ENCODE measurements at regions of chr10 and their contacts with region 1.

Region 1: GRCh38 chr10:70296406-70296899 is 12.6 kb upstream of the NPFFR1 start:
- DNase-seq: peak; percentile 69 to 83 (median 83)
- H3K4me3 ChIP-seq: peak overlapping the region in 1 of 3 experiments; percentile 19
- H3K4me3 Mint-ChIP-seq: peak overlapping the region in 1 of 2 donors; percentile 67
- H3K27ac ChIP-seq: peak overlapping the region; percentile 71 to 73
- H3K27ac Mint-ChIP-seq: peak overlapping the region; percentile 84 to 92 (median 89)
- H3K4me1 ChIP-seq: peaks cover 63 to 65% of the 10 kb centered on the region in 2 donors
- H3K4me1 Mint-ChIP-seq: peaks cover 65% of the 10 kb centered on the region
- H3K27me3 ChIP-seq: no peaks in the 10 kb centered on the region
- H3K27me3 Mint-ChIP-seq: peaks cover 0 to 1% (median 0%) of the 10 kb centered on the region in 3 donors
- CTCF ChIP-seq: no peak

Region 2: GRCh38 chr10:69541463-69541862 is 755.0 kb before region 1 on chr10:
- intact Hi-C with region 1: no loop called
- DNase-seq: no peak
- H3K4me3 ChIP-seq: no peak overlapping the region
- H3K4me3 Mint-ChIP-seq: no peak overlapping the region
- H3K27ac ChIP-seq: no peak overlapping the region
- H3K27ac Mint-ChIP-seq: no peak overlapping the region
- H3K4me1 ChIP-seq: no peaks in the 10 kb centered on the region
- H3K4me1 Mint-ChIP-seq: no peaks in the 10 kb centered on the region
- H3K27me3 ChIP-seq: no peaks in the 10 kb centered on the region
- H3K27me3 Mint-ChIP-seq: peaks cover 2 to 6% (median 3%) of the 10 kb centered on the region in 3 donors
- CTCF ChIP-seq: no peak

Region 3: GRCh38 chr10:69988094-69988493 is 308.4 kb before region 1 on chr10:
- intact Hi-C with region 1: no loop called
- DNase-seq: no peak
- H3K4me3 ChIP-seq: no peak overlapping the region
- H3K4me3 Mint-ChIP-seq: no peak overlapping the region
- H3K27ac ChIP-seq: no peak overlapping the region
- H3K27ac Mint-ChIP-seq: no peak overlapping the region
- H3K4me1 ChIP-seq: no peaks in the 10 kb centered on the region
- H3K4me1 Mint-ChIP-seq: no peaks in the 10 kb centered on the region
- H3K27me3 ChIP-seq: peaks cover 2 to 23% of the 10 kb centered on the region in 2 donors
- H3K27me3 Mint-ChIP-seq: peaks cover 13 to 35% (median 34%) of the 10 kb centered on the region in 3 donors
- CTCF ChIP-seq: no peak

Region 4: GRCh38 chr10:70272925-70273316 is 23.5 kb before region 1 on chr10:
- intact Hi-C with region 1: no loop called
- DNase-seq: peak in 2 of 3 donors; percentile 33 to 51
- H3K4me3 ChIP-seq: no peak overlapping the region
- H3K4me3 Mint-ChIP-seq: peak overlapping the region in 1 of 2 donors; percentile 42
- H3K27ac ChIP-seq: no peak overlapping the region
- H3K27ac Mint-ChIP-seq: no peak overlapping the region
- H3K4me1 ChIP-seq: peaks cover 36 to 48% of the 10 kb centered on the region in 2 donors
- H3K4me1 Mint-ChIP-seq: peaks cover 46% of the 10 kb centered on the region
- H3K27me3 ChIP-seq: no peaks in the 10 kb centered on the region
- H3K27me3 Mint-ChIP-seq: peaks cover 3 to 7% (median 3%) of the 10 kb centered on the region in 3 donors
- CTCF ChIP-seq: peak; percentile 81

Region 5: GRCh38 chr10:70331486-70332268 is 35.2 kb after region 1 on chr10:
- intact Hi-C with region 1: loop called in 1 of 2 experiments (anchors 5 kb)
- DNase-seq: peak; percentile 94 to 98 (median 96)
- H3K4me3 ChIP-seq: peak overlapping the region in 1 of 3 experiments; percentile 58
- H3K4me3 Mint-ChIP-seq: peak overlapping the region; percentile 59 to 84
- H3K27ac ChIP-seq: peak overlapping the region in 1 of 2 donors; percentile 42
- H3K27ac Mint-ChIP-seq: peak overlapping the region; percentile 57 to 89 (median 83)
- H3K4me1 ChIP-seq: peaks cover 31 to 34% of the 10 kb centered on the region in 2 donors
- H3K4me1 Mint-ChIP-seq: peaks cover 51% of the 10 kb centered on the region
- H3K27me3 ChIP-seq: peaks cover 14 to 68% of the 10 kb centered on the region in 2 donors
- H3K27me3 Mint-ChIP-seq: peaks cover 66 to 89% (median 72%) of the 10 kb centered on the region in 3 donors
- CTCF ChIP-seq: peak; percentile 38

Measured in CD14-positive monocyte (primary cell).